ENCODE measurements at regions of chr1 and their contacts with region 1.

Region 1: GRCh38 chr1:63691701-63692425 is 82.0 kb upstream of the ROR1 start:
- DNase-seq: peak; percentile 92
- ATAC-seq: peak; percentile 91
- H3K4me3 ChIP-seq: no peak overlapping the region
- H3K27ac ChIP-seq: peak overlapping the region; percentile 60
- H3K4me1 ChIP-seq: peaks cover 10% of the 10 kb centered on the region
- H3K27me3 ChIP-seq: no peaks in the 10 kb centered on the region
- CTCF ChIP-seq: peak; percentile 88

Region 2: GRCh38 chr1:63615768-63616420 is 76.0 kb before region 1 on chr1:
- CTCF ChIA-PET with region 1: no interaction called
- POLR2A ChIA-PET with region 1: no interaction called
- intact Hi-C with region 1: loop called (anchors 1 kb)
- DNase-seq: peak; percentile 94
- ATAC-seq: peak; percentile 76
- H3K4me3 ChIP-seq: no peak overlapping the region
- H3K27ac ChIP-seq: no peak overlapping the region
- H3K4me1 ChIP-seq: peaks cover 7% of the 10 kb centered on the region; the same call in 1 of the 2 replicates
- H3K27me3 ChIP-seq: no peaks in the 10 kb centered on the region
- CTCF ChIP-seq: peak; percentile 88

Region 3: DNA sequence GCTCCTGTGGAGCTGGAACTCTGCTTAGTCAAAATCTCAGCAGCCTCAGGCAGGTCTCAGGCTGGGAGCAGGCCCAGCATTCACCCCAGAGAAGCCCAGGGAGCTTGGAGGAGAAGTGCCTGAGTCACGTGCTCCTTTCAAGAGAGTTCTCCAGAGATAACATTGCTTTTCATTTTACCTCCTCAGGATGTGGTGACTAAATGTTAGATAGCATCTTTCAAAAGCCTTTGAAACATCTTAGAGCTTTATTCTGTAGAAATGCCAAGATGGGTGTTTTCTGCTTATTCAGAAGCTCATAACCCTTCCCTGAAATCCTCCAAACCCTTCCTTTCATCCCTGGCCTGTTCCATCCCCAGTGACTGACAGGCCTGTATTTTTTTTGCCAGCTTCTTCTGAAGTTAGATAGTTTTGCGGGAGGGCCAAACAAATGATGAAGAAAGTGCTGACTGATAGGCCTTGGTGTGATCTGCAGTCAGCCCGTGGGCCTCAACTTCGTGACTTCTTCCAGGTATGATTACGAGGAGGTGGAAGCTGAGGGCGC is 40.6 kb before region 1 on chr1:
- CTCF ChIA-PET with region 1: no interaction called
- POLR2A ChIA-PET with region 1: no interaction called
- intact Hi-C with region 1: no loop called
- DNase-seq: peak; percentile 7
- ATAC-seq: peak; percentile 56
- H3K4me3 ChIP-seq: no peak overlapping the region
- H3K27ac ChIP-seq: no peak overlapping the region
- H3K4me1 ChIP-seq: no peaks in the 10 kb centered on the region
- H3K27me3 ChIP-seq: no peaks in the 10 kb centered on the region
- CTCF ChIP-seq: no peak

Region 4: GRCh38 chr1:63674238-63674864 is 17.5 kb before region 1 on chr1:
- CTCF ChIA-PET with region 1: interaction called, 29 read pairs
- POLR2A ChIA-PET with region 1: no interaction called
- intact Hi-C with region 1: no loop called
- DNase-seq: peak; percentile 96
- ATAC-seq: peak; percentile 98
- H3K4me3 ChIP-seq: no peak overlapping the region
- H3K27ac ChIP-seq: peak overlapping the region; percentile 60
- H3K4me1 ChIP-seq: peaks cover 14% of the 10 kb centered on the region
- H3K27me3 ChIP-seq: no peaks in the 10 kb centered on the region
- CTCF ChIP-seq: peak; percentile 89

Region 5: GRCh38 chr1:63773815-63774616 is 82.2 kb after region 1 on chr1 and contains the start of gene ROR1:
- CTCF ChIA-PET with region 1: interaction called, 11 read pairs
- POLR2A ChIA-PET with region 1: interaction called, 8 read pairs
- intact Hi-C with region 1: loop called (anchors 1 kb)
- DNase-seq: peak; percentile 87
- ATAC-seq: peak; percentile 88
- H3K4me3 ChIP-seq: peak within 1 kb of the TSS; percentile 93
- H3K27ac ChIP-seq: peak within 1 kb of the TSS; percentile 85
- H3K4me1 ChIP-seq: peaks cover 34% of the 10 kb centered on the region
- H3K27me3 ChIP-seq: no peaks in the 10 kb centered on the region
- CTCF ChIP-seq: peak; percentile 72
- total RNA-seq, gene ROR1: 16.5 and 22.6 TPM in 2 replicates

Region 6: DNA sequence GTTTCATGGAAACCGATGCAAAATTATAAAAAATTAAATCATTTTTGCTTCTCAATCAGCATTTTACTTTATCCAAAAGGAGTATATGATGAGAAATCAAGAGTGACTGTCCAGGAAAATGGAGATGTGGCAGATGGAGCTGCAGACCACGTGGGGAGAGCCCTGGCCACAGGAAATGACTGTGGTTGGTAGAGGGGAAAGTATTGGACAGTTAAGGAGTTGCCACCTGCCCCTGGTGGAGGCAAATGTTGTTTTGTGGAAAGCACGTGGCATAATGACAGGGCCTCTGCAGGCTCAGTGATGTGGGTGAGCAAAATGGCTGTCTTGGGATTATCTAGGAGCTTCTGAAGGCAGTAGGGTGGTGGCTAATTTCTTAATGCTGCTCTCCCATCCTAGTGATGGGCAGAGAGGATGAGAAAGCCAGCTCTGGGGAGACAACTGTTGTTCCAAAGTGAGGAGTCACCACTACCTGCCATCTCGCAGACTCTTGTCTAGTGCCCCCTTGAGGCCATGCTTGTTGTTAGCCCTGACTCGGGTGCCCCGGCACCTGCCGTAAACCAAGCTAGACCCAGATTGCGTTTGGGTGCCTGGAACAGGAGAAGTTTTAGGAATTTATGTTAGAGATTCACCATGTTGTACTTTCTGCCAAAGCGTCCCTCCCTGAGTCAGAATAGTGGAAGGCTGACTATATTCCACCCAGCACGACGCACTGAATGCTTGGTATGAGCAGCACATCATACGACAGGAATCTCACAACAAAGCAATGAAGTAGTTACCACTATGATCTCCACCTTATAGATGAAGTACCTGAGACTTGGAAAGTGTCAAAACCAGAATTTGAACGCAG is 225.9 kb after region 1 on chr1:
- CTCF ChIA-PET with region 1: interaction called, 11 read pairs
- POLR2A ChIA-PET with region 1: no interaction called
- intact Hi-C with region 1: loop called (anchors 5 kb)
- DNase-seq: peak; percentile 29
- ATAC-seq: no peak
- H3K4me3 ChIP-seq: no peak overlapping the region
- H3K27ac ChIP-seq: no peak overlapping the region
- H3K4me1 ChIP-seq: peaks cover 25% of the 10 kb centered on the region
- H3K27me3 ChIP-seq: no peaks in the 10 kb centered on the region
- CTCF ChIP-seq: peak; percentile 53

Region 7: DNA sequence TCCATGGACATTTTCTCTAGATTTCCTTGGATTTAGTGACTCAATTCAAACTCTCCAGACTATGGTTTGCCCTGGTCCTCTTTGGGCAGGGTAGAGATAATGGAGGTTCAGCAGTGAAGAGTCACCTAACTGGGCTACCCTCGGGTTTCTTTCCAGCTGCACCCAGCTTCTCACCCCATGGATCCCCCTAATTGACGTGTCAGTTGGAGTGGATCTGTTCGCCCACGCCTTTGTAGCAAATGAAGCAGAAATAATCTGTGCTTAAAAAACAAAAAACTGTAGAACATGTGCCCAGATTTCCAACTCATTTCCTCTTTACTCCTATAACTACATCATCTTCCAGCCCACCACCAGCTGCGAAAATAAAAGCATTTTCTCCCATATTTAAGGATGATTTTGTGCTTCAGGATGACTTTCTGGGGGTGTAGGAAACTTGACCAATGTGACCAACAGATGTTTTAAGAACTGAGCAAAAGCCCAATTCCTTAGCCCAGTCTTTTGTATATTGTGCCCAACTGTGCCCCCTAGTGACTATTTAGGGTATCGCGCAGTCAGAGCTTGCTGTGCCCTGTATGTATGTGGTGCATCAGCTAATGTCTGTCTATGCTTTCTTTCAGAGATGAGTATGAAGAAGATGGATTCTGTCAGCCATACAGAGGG is 445.0 kb after region 1 on chr1:
- CTCF ChIA-PET with region 1: interaction called, 29 read pairs
- POLR2A ChIA-PET with region 1: no interaction called
- intact Hi-C with region 1: loop called (anchors 1 kb)
- DNase-seq: peak; percentile 93
- ATAC-seq: peak; percentile 51
- H3K4me3 ChIP-seq: no peak overlapping the region
- H3K27ac ChIP-seq: no peak overlapping the region
- H3K4me1 ChIP-seq: peaks cover 42% of the 10 kb centered on the region
- H3K27me3 ChIP-seq: no peaks in the 10 kb centered on the region
- CTCF ChIP-seq: peak; percentile 95

Region 8: GRCh38 chr1:64176659-64177058 is 484.8 kb after region 1 on chr1:
- CTCF ChIA-PET with region 1: no interaction called
- POLR2A ChIA-PET with region 1: no interaction called
- intact Hi-C with region 1: no loop called
- DNase-seq: no peak
- ATAC-seq: no peak
- H3K4me3 ChIP-seq: no peak overlapping the region
- H3K27ac ChIP-seq: no peak overlapping the region
- H3K4me1 ChIP-seq: peaks cover 24% of the 10 kb centered on the region
- H3K27me3 ChIP-seq: no peaks in the 10 kb centered on the region
- CTCF ChIP-seq: no peak

Measured in PC-3 (cell line).